ENCODE measurements at regions of chr3 and their contacts with region 1.

Region 1: DNA sequence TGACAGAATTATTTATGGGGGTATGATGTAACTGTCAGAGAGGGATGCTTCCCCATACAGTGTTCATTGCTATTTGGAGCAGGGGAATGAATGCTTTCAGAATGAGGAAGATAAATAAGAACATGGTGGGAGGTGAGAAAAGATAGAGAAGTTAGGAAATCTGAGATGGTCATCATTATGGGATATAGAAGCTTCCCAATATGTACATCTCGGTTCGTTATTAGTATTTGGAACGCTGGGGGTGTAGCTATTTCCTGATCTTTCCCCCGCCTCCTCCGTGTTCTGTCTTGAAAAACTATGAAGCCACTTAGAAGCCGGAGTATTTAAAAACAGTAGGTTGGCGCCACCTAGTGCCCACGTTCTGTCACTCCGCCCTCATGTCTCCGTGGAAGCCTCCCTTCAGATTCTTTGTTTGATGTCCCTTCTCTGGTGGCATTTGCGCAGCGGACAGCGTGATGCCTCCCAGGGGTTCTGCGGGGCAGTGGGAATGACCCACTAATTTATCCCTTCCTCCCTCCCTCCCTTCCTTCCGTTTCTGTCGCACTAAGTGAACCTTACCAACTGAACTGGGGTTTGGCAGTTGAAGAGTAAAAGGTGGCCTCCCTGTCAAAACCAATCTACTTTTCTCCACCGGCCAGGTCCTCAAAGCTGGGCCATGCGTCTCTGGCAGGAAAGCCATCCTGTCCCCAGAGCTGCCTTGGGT is 184.5 kb downstream of the FEZF2 start:
- DNase-seq: peak; percentile 75
- ATAC-seq: peak; percentile 94
- H3K4me3 ChIP-seq: no peak overlapping the region
- H3K27ac ChIP-seq: no peak overlapping the region
- H3K4me1 ChIP-seq: no peaks in the 10 kb centered on the region
- H3K27me3 ChIP-seq: no peaks in the 10 kb centered on the region
- CTCF ChIP-seq: peak; percentile 81
- POLR2A ChIP-seq: no peak
- RAD21 ChIP-seq: peak; percentile 82

Region 2: GRCh38 chr3:61251174-61251972 is 937.5 kb before region 1 on chr3 and contains the start of gene FHIT:
- CTCF ChIA-PET with region 1: no interaction called
- POLR2A ChIA-PET with region 1: no interaction called
- dilution Hi-C with region 1: no loop called
- in situ Hi-C with region 1: no loop called
- intact Hi-C with region 1: loop called (anchors 2 kb)
- DNase-seq: peak; percentile 87
- ATAC-seq: peak; percentile 100
- H3K4me3 ChIP-seq: peak within 1 kb of the TSS; percentile 62
- H3K27ac ChIP-seq: no peak within 1 kb of the TSS; the same call in 1 of the 2 replicates
- H3K4me1 ChIP-seq: no peaks in the 10 kb centered on the region
- H3K27me3 ChIP-seq: no peaks in the 10 kb centered on the region; the same call in 1 of the 2 replicates
- CTCF ChIP-seq: no peak
- POLR2A ChIP-seq: no peak
- RAD21 ChIP-seq: no peak
- total RNA-seq, gene FHIT: not detected in 2 replicates

Region 3: GRCh38 chr3:61381745-61382392 is 807.0 kb before region 1 on chr3:
- CTCF ChIA-PET with region 1: interaction called, 3 read pairs
- POLR2A ChIA-PET with region 1: no interaction called
- dilution Hi-C with region 1: no loop called
- in situ Hi-C with region 1: no loop called
- intact Hi-C with region 1: loop called (anchors 2 kb)
- DNase-seq: peak; percentile 7
- ATAC-seq: no peak
- H3K4me3 ChIP-seq: no peak overlapping the region
- H3K27ac ChIP-seq: no peak overlapping the region
- H3K4me1 ChIP-seq: no peaks in the 10 kb centered on the region
- H3K27me3 ChIP-seq: no peaks in the 10 kb centered on the region
- CTCF ChIP-seq: peak; percentile 39
- POLR2A ChIP-seq: no peak
- RAD21 ChIP-seq: peak; percentile 35

Region 4: GRCh38 chr3:61637088-61638051 is 551.5 kb before region 1 on chr3:
- CTCF ChIA-PET with region 1: no interaction called
- POLR2A ChIA-PET with region 1: no interaction called
- dilution Hi-C with region 1: no loop called
- in situ Hi-C with region 1: no loop called
- intact Hi-C with region 1: loop called (anchors 10 kb)
- DNase-seq: peak; percentile 45
- ATAC-seq: peak; percentile 38
- H3K4me3 ChIP-seq: no peak overlapping the region
- H3K27ac ChIP-seq: peak overlapping the region; percentile 1; the same call in 1 of the 2 replicates
- H3K4me1 ChIP-seq: peaks cover 10% of the 10 kb centered on the region
- H3K27me3 ChIP-seq: no peaks in the 10 kb centered on the region
- CTCF ChIP-seq: no peak
- POLR2A ChIP-seq: no peak
- RAD21 ChIP-seq: no peak

Region 5: DNA sequence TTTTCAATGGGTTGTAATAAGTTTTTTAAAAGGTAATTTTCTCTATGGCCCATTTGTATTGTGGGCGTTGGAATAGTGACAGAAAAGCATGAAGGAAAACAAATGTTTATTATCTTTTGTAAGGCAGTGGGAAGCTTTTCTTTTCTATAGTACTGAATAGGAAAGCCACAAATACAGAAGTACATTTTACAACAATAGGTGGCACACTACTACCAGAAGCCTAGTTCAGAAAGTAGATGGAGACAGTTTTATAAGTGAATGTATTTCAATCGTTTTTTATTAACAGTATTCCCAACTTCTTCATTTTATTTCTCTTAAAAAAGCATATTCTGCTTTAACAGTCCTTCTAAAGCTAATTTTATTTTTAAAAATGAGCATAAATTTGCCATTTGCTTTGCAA is 330.8 kb before region 1 on chr3:
- CTCF ChIA-PET with region 1: interaction called, 4 read pairs
- POLR2A ChIA-PET with region 1: no interaction called
- dilution Hi-C with region 1: no loop called
- in situ Hi-C with region 1: loop called (anchors 5 kb)
- intact Hi-C with region 1: loop called (anchors 1 kb)
- DNase-seq: peak; percentile 56
- ATAC-seq: peak; percentile 66
- H3K4me3 ChIP-seq: no peak overlapping the region
- H3K27ac ChIP-seq: no peak overlapping the region
- H3K4me1 ChIP-seq: peaks cover 6% of the 10 kb centered on the region
- H3K27me3 ChIP-seq: no peaks in the 10 kb centered on the region
- CTCF ChIP-seq: peak; percentile 58
- POLR2A ChIP-seq: no peak
- RAD21 ChIP-seq: peak; percentile 63

Region 6: DNA sequence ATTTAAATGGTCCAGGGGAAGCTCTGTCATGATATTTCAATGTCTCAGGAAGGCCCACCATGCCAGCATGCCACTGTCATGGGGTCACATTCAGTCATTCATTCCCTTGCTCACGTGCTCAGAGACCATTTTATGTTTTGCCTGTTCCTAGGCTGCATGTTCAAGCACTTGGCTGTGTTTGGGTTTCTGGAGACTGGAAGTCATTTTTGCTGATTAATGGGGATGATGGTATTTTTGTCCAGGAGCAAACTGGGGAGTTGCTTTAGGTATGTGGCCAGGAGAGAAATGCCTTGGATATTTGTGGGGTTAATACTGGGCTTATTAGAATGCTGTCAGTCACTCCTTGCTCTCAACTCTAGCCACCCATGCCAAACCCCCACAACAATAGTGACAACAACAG is 323.9 kb before region 1 on chr3:
- CTCF ChIA-PET with region 1: no interaction called
- POLR2A ChIA-PET with region 1: no interaction called
- dilution Hi-C with region 1: no loop called
- in situ Hi-C with region 1: loop called (anchors 5 kb)
- intact Hi-C with region 1: no loop called
- DNase-seq: no peak
- ATAC-seq: no peak
- H3K4me3 ChIP-seq: no peak overlapping the region
- H3K27ac ChIP-seq: no peak overlapping the region
- H3K4me1 ChIP-seq: 0 out of 2 replicates have a peak, but pooled peaks cover 2% of the 10 kb centered on the region
- H3K27me3 ChIP-seq: no peaks in the 10 kb centered on the region
- CTCF ChIP-seq: no peak
- POLR2A ChIP-seq: no peak
- RAD21 ChIP-seq: no peak

Region 7: GRCh38 chr3:62229920-62230319 is 41.1 kb after region 1 on chr3:
- CTCF ChIA-PET with region 1: no interaction called
- POLR2A ChIA-PET with region 1: no interaction called
- dilution Hi-C with region 1: no loop called
- in situ Hi-C with region 1: no loop called
- intact Hi-C with region 1: no loop called
- DNase-seq: no peak
- ATAC-seq: peak; percentile 35
- H3K4me3 ChIP-seq: no peak overlapping the region
- H3K27ac ChIP-seq: no peak overlapping the region
- H3K4me1 ChIP-seq: no peaks in the 10 kb centered on the region; the same call in 1 of the 2 replicates
- H3K27me3 ChIP-seq: no peaks in the 10 kb centered on the region
- CTCF ChIP-seq: peak; percentile 22; the same call in 1 of the 2 replicates
- POLR2A ChIP-seq: no peak
- RAD21 ChIP-seq: no peak

Region 8: GRCh38 chr3:62289092-62289491 is 100.3 kb after region 1 on chr3:
- CTCF ChIA-PET with region 1: interaction called, 13 read pairs
- POLR2A ChIA-PET with region 1: no interaction called
- dilution Hi-C with region 1: no loop called
- in situ Hi-C with region 1: no loop called
- intact Hi-C with region 1: no loop called
- DNase-seq: no peak
- ATAC-seq: no peak
- H3K4me3 ChIP-seq: no peak overlapping the region
- H3K27ac ChIP-seq: no peak overlapping the region
- H3K4me1 ChIP-seq: no peaks in the 10 kb centered on the region
- H3K27me3 ChIP-seq: no peaks in the 10 kb centered on the region
- CTCF ChIP-seq: no peak
- POLR2A ChIP-seq: no peak
- RAD21 ChIP-seq: no peak

Measured in IMR-90 (cell line).